ENCODE measurements at regions of chr1 and their contacts with region 1.

Region 1: DNA sequence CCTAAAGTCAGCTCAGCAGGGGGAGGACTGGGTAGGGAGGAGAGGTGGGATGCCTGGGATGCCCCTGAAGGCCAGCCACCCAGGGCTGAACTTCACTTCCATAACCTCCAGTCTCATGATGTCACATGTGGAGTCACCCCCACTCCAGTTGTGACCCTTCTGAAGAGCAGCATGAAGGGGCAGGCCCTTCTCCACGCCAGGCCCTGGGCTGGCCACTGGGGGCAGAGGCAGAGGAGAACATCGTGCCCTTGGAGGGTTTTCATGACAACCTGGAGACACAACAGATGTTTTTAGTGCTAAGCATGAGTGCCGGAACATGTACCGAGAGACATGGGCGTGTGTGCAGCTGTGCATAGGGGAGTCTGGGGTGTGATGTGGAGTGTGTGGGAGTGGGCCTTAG is 37.6 kb downstream of the FAAH start:
- DNase-seq: no peak
- ATAC-seq: peak; percentile 32
- H3K4me3 Mint-ChIP-seq: no peak overlapping the region
- H3K27ac Mint-ChIP-seq: no peak overlapping the region
- H3K4me1 Mint-ChIP-seq: no peaks in the 10 kb centered on the region
- H3K27me3 Mint-ChIP-seq: peaks cover 15% of the 10 kb centered on the region
- CTCF ChIP-seq: no peak

Region 2: DNA sequence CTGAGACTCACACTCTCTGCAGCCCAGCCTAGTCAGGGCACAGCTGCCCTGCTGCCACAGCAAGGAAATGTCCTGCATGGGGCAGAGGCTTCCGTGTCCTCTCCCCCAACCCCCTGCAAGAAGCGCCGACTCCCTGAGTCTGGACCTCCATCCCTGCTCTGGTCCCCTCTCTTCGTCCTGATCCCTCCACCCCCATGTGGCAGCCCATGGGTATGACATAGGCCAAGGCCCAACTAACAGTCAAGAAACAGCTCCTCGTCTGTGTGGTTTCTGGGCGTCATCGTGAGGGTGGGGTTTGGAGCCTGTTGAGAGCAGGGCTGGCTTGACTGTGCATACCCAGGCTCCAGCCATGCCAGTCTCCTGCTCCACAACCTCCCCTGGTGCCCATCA is 18.1 kb before region 1 on chr1:
- CTCF ChIA-PET with region 1: interaction called, 10 read pairs
- POLR2A ChIA-PET with region 1: no interaction called
- DNase-seq: peak; percentile 71
- ATAC-seq: peak; percentile 84
- H3K4me3 Mint-ChIP-seq: no peak overlapping the region
- H3K27ac Mint-ChIP-seq: no peak overlapping the region
- H3K4me1 Mint-ChIP-seq: 0 out of 2 replicates have a peak, but pooled peaks cover 2% of the 10 kb centered on the region
- H3K27me3 Mint-ChIP-seq: no peaks in the 10 kb centered on the region; the same call in 1 of the 2 replicates
- CTCF ChIP-seq: peak; percentile 55

Measured in WTC11 (cell line).